ENCODE measurements at regions of chr10 and their contacts with region 1.

Region 1: GRCh38 chr10:28179006-28179742 is 123.7 kb downstream of the MPP7 start:
- DNase-seq: peak; percentile 71
- H3K4me3 ChIP-seq: no peak overlapping the region
- H3K27ac ChIP-seq: no peak overlapping the region
- H3K4me1 ChIP-seq: peaks cover 13% of the 10 kb centered on the region
- H3K27me3 ChIP-seq: no peaks in the 10 kb centered on the region
- CTCF ChIP-seq: peak; percentile 37 to 40
- POLR2A ChIP-seq: no peak

Region 2: DNA sequence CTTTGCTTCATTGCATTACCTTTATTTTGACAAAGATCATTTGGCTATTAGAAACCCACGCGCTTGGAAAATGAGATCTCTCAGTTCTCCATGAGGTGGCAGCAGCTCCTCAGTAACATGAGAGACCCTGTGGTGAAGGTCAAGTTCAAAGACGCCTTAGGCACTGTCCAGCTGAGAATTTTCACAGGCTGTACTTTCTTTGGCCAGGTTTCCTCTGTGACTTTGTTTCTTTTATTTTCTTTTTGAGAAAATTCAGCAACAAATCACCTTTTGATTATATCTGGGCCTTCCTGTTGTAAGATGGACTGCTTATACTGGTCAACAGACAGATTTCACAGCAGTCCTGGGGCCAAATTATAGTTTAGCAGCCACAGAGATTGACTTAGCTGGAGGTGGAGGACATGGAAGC is 620.6 kb before region 1 on chr10:
- CTCF ChIA-PET with region 1: interaction called, 4 read pairs
- POLR2A ChIA-PET with region 1: no interaction called
- dilution Hi-C with region 1: no loop called
- intact Hi-C with region 1: loop called (anchors 1 kb)
- DNase-seq: peak; percentile 48
- H3K4me3 ChIP-seq: no peak overlapping the region
- H3K27ac ChIP-seq: no peak overlapping the region
- H3K4me1 ChIP-seq: no peaks in the 10 kb centered on the region
- H3K27me3 ChIP-seq: no peaks in the 10 kb centered on the region
- CTCF ChIP-seq: peak; percentile 50 to 53
- POLR2A ChIP-seq: no peak

Region 3: GRCh38 chr10:27759483-27760272 is 419.5 kb before region 1 on chr10:
- CTCF ChIA-PET with region 1: interaction called, 11 read pairs
- POLR2A ChIA-PET with region 1: no interaction called
- dilution Hi-C with region 1: no loop called
- intact Hi-C with region 1: no loop called
- DNase-seq: no peak
- H3K4me3 ChIP-seq: no peak overlapping the region
- H3K27ac ChIP-seq: no peak overlapping the region
- H3K4me1 ChIP-seq: no peaks in the 10 kb centered on the region
- H3K27me3 ChIP-seq: peaks cover 7 to 19% of the 10 kb centered on the region in 2 experiments
- CTCF ChIP-seq: no peak
- POLR2A ChIP-seq: no peak

Region 4: GRCh38 chr10:27949528-27950241 is 229.5 kb before region 1 on chr10:
- CTCF ChIA-PET with region 1: interaction called, 4 read pairs
- POLR2A ChIA-PET with region 1: no interaction called
- dilution Hi-C with region 1: no loop called
- intact Hi-C with region 1: loop called (anchors 2 kb)
- DNase-seq: no peak
- H3K4me3 ChIP-seq: no peak overlapping the region
- H3K27ac ChIP-seq: no peak overlapping the region
- H3K4me1 ChIP-seq: no peaks in the 10 kb centered on the region
- H3K27me3 ChIP-seq: no peaks in the 10 kb centered on the region
- CTCF ChIP-seq: no peak
- POLR2A ChIP-seq: no peak

Region 5: GRCh38 chr10:28087661-28088351 is 91.4 kb before region 1 on chr10:
- CTCF ChIA-PET with region 1: interaction called, 8 read pairs
- POLR2A ChIA-PET with region 1: no interaction called
- dilution Hi-C with region 1: no loop called
- intact Hi-C with region 1: loop called (anchors 2 kb)
- DNase-seq: peak; percentile 44
- H3K4me3 ChIP-seq: no peak overlapping the region
- H3K27ac ChIP-seq: peak overlapping the region; percentile 99
- H3K4me1 ChIP-seq: peaks cover 40% of the 10 kb centered on the region
- H3K27me3 ChIP-seq: no peaks in the 10 kb centered on the region
- CTCF ChIP-seq: no peak
- POLR2A ChIP-seq: no peak

Region 6: DNA sequence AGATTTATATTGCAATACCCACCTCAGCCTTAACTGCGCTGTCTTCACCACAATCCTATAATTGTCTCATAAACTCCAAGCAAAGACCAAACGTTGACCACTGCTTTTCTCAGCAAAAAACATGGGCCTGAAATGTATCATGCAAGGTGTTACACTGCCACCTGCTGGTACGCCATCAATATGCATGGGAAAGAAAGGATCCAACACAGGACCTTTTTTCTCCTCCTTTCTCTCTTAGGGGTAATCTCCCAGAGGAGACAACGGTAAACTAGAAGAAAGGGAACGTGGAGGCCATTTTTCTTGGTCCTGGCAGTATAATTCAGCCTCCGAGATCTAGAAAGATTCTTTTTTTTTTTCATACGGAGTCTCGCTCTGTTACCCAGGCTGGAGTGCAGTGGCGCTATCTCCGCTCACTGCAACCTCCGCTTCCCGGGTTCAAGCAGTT is 202.8 kb after region 1 on chr10:
- CTCF ChIA-PET with region 1: interaction called, 3 read pairs
- POLR2A ChIA-PET with region 1: no interaction called
- dilution Hi-C with region 1: no loop called
- intact Hi-C with region 1: loop called (anchors 1 kb)
- DNase-seq: peak; percentile 83
- H3K4me3 ChIP-seq: no peak overlapping the region
- H3K27ac ChIP-seq: no peak overlapping the region
- H3K4me1 ChIP-seq: no peaks in the 10 kb centered on the region
- H3K27me3 ChIP-seq: no peaks in the 10 kb centered on the region
- CTCF ChIP-seq: peak; percentile 78 to 85
- POLR2A ChIP-seq: no peak

Region 7: GRCh38 chr10:28400681-28401080 is 221.5 kb after region 1 on chr10:
- CTCF ChIA-PET with region 1: no interaction called
- POLR2A ChIA-PET with region 1: no interaction called
- dilution Hi-C with region 1: no loop called
- intact Hi-C with region 1: no loop called
- DNase-seq: no peak
- H3K4me3 ChIP-seq: no peak overlapping the region
- H3K27ac ChIP-seq: no peak overlapping the region
- H3K4me1 ChIP-seq: no peaks in the 10 kb centered on the region
- H3K27me3 ChIP-seq: no peaks in the 10 kb centered on the region
- CTCF ChIP-seq: no peak
- POLR2A ChIP-seq: no peak

Region 8: GRCh38 chr10:28418069-28418468 is 238.9 kb after region 1 on chr10:
- CTCF ChIA-PET with region 1: no interaction called
- POLR2A ChIA-PET with region 1: no interaction called
- dilution Hi-C with region 1: no loop called
- intact Hi-C with region 1: no loop called
- DNase-seq: no peak
- H3K4me3 ChIP-seq: no peak overlapping the region
- H3K27ac ChIP-seq: no peak overlapping the region
- H3K4me1 ChIP-seq: no peaks in the 10 kb centered on the region
- H3K27me3 ChIP-seq: peaks cover 0 to 3% of the 10 kb centered on the region in 2 experiments
- CTCF ChIP-seq: no peak
- POLR2A ChIP-seq: no peak

Region 9: GRCh38 chr10:28505359-28505959 is 326.3 kb after region 1 on chr10:
- CTCF ChIA-PET with region 1: no interaction called
- POLR2A ChIA-PET with region 1: no interaction called
- dilution Hi-C with region 1: no loop called
- intact Hi-C with region 1: no loop called
- DNase-seq: no peak
- H3K4me3 ChIP-seq: no peak overlapping the region
- H3K27ac ChIP-seq: no peak overlapping the region
- H3K4me1 ChIP-seq: no peaks in the 10 kb centered on the region
- H3K27me3 ChIP-seq: peaks cover 0 to 2% of the 10 kb centered on the region in 2 experiments
- CTCF ChIP-seq: no peak
- POLR2A ChIP-seq: no peak